ENCODE measurements at regions of chr9 and their contacts with region 1.

Region 1: GRCh38 chr9:128043467-128043868 is 23.7 kb downstream of the NAIF1 start:
- DNase-seq: peak; percentile 49 to 72
- H3K4me3 ChIP-seq: no peak overlapping the region
- H3K4me3 Mint-ChIP-seq: no peak overlapping the region
- H3K27ac Mint-ChIP-seq: peak overlapping the region; percentile 39
- H3K4me1 ChIP-seq: peaks cover 9% of the 10 kb centered on the region; the same call in 1 of the 2 replicates
- H3K4me1 Mint-ChIP-seq: peaks cover 12% of the 10 kb centered on the region
- H3K27me3 ChIP-seq: no peaks in the 10 kb centered on the region
- H3K27me3 Mint-ChIP-seq: no peaks in the 10 kb centered on the region
- CTCF ChIP-seq: peak in 1 of 2 experiments; percentile 11

Region 2: DNA sequence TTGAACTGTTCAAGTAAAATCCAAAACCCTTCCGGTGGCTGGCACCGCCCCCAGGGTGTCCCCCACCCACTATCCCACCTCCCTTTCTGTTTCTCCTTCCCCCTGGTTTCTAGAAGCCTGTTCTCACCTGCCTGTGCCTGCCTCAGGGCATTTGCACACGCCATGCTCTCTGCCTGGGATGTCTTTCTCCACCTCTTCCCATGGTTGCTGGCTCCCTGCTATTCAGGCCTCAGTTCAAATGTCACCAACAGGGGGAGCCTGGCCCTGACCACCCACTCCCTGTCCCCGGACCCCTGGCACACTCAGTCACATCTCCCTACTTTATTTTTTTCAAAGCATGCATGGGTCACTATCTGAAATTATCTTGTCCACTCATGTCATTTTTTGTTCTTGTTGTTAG is 22.8 kb before region 1 on chr9:
- CTCF ChIA-PET with region 1: interaction called, 4 read pairs
- POLR2A ChIA-PET with region 1: interaction called, 14 read pairs
- intact Hi-C with region 1: no loop called
- DNase-seq: peak in 1 of 2 experiments; percentile 20
- H3K4me3 ChIP-seq: no peak overlapping the region
- H3K4me3 Mint-ChIP-seq: no peak overlapping the region
- H3K27ac Mint-ChIP-seq: no peak overlapping the region
- H3K4me1 ChIP-seq: no peaks in the 10 kb centered on the region
- H3K4me1 Mint-ChIP-seq: no peaks in the 10 kb centered on the region
- H3K27me3 ChIP-seq: no peaks in the 10 kb centered on the region
- H3K27me3 Mint-ChIP-seq: no peaks in the 10 kb centered on the region
- CTCF ChIP-seq: no peak

Measured in Caco-2 (cell line).